ENCODE measurements at regions of chr10 and their contacts with region 1.

Region 1: DNA sequence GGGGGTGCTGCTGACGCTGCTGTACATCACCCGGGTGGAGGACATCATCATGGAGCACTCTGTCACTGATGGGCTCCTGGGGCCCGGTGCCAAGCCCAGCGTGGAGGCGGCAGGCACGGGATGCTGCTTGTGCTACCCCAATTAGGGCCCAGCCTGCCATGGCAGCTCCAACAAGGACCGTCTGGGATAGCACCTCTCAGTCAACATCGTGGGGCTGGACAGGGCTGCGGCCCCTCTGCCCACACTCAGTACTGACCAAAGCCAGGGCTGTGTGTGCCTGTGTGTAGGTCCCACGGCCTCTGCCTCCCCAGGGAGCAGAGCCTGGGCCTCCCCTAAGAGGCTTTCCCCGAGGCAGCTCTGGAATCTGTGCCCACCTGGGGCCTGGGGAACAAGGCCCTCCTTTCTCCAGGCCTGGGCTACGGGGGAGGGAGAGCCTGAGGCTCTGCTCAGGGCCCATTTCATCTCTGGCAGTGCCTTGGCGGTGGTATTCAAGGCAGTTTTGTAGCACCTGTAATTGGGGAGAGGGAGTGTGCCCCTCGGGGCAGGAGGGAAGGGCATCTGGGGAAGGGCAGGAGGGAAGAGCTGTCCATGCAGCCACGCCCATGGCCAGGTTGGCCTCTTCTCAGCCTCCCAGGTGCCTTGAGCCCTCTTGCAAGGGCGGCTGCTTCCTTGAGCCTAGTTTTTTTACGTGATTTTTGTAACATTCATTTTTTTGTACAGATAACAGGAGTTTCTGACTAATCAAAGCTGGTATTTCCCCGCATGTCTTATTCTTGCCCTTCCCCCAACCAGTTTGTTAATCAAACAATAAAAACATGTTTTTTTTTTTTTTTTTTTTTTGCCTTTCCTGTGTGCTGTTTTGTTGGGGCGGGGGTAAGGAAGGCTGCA is 55.8 kb downstream of the TSPAN15 start:
- DNase-seq: no peak
- ATAC-seq: peak; percentile 28 to 36

Region 2: GRCh38 chr10:69337296-69338132 is 169.6 kb before region 1 on chr10:
- intact Hi-C with region 1: no loop called
- DNase-seq: peak; percentile 60
- ATAC-seq: peak; percentile 14 to 16

Region 3: DNA sequence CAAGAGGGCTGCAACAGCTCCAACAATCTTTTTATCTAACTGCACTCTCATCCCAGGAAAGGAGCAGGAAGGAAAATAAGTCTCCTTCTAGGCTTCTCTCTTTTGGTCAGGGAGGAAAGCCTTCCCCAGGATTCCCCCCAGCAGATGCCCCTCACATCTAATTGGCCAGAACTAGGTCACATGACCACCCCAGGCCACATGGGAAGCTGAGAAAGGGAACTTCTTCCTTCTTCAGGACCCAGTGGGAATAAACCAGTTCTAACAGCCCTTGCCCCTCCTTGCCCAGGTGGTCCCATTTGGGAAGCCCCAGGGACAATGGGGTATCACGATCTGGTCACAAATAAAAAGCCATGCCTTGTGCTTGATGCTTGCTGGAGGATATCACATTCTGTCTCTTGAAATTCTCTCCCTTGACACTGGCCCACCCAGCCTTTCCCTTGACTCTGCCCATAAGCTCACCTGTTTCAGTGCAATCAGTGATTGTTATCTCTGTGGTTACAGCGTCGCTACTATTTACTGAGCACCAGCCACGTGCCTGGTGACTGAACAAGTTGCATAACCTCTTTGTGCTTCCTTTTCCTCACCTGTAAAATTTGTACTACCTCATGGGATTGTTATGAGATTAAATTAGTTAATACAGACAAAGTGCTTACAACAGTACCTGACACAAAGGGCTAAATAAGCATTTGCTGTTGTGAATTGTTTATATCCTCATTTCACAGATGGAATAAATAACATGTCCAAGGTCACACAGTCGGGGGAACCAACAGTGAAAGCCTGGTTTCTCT is 81.4 kb before region 1 on chr10:
- intact Hi-C with region 1: loop called (anchors 2 to 5 kb)
- DNase-seq: no peak
- ATAC-seq: no peak

Measured in left cardiac atrium (tissue), 4 donors.